CD8-positive, alpha-beta memory T cell (primary cell): ENCODE measurements at regions of chr13 and their contacts with region 1.

Region 1: DNA sequence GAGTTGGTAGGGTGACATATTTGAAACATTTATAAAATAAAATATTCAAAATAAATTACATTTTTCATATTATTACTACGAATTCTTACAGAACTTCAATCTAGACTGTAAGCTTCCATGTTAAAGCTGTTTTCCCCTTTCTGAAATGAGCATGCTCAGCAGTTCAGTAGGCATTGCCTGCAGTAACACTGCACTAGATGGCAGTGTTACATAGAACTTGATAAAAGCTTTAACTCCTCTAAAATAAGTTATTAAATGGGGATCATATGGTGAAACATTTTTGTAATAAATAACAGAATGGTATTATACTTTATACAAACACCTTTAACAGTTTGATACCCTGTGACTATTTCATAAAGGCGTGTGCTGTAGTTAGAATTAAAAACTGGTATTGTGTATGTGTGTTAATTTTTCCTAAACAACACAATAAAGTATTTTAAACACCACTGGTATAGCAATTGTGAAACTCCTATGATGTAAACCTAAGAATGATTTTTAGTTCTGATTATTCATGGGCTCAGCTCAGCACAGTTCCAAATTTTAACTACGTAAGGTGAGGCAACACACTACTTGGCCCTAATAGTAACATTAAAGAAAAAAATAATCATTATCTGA is 11.6 kb upstream of the GPR18 start:
- DNase-seq: peak in 2 of 5 donors; percentile 52 to 53
- H3K4me3 ChIP-seq: no peak overlapping the region
- H3K4me3 Mint-ChIP-seq: peak overlapping the region in 1 of 7 donors; percentile 18
- H3K27ac ChIP-seq: no peak overlapping the region
- H3K27ac Mint-ChIP-seq: peak overlapping the region in 7 of 8 donors; percentile 50 to 99 (median 82)
- H3K4me1 ChIP-seq: peaks cover 56% of the 10 kb centered on the region
- H3K4me1 Mint-ChIP-seq: peaks cover 65 to 74% (median 72%) of the 10 kb centered on the region in 3 donors
- H3K27me3 ChIP-seq: no peaks in the 10 kb centered on the region
- H3K27me3 Mint-ChIP-seq: no peaks in the 10 kb centered on the region

Region 2: DNA sequence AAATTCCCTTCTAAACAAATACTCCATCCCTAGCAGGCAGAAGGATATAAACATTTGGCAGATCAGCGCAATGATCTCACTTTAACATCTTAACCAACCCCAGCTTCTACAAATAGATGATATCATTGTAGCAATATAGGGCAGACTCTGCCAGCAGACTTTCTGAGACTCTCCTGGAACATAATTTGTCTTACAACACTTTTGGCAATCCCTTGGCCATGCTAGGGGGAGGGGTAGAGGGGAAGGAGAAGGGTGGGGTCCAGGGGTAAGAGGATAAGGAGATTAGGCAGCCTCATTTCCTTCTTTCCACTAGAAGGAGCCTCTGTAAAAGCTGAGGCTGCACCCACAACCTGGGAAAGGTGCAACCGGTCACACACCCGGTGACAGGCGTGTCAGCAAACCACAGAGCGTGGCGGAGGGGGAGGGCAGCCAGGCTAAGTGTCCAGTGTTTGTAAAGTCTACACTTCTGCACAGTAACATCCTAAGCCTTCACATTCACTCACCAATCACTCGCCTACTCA is 77.8 kb before region 1 on chr13:
- CTCF ChIA-PET with region 1: interaction called, 223 read pairs
- POLR2A ChIA-PET with region 1: interaction called, 10 read pairs
- DNase-seq: no peak
- H3K4me3 ChIP-seq: no peak overlapping the region
- H3K4me3 Mint-ChIP-seq: no peak overlapping the region
- H3K27ac ChIP-seq: no peak overlapping the region
- H3K27ac Mint-ChIP-seq: peak overlapping the region in 6 of 8 donors; percentile 38 to 88 (median 62)
- H3K4me1 ChIP-seq: peaks cover 4% of the 10 kb centered on the region
- H3K4me1 Mint-ChIP-seq: peaks cover 14 to 30% (median 27%) of the 10 kb centered on the region in 3 donors
- H3K27me3 ChIP-seq: no peaks in the 10 kb centered on the region
- H3K27me3 Mint-ChIP-seq: peaks cover 0 to 2% of the 10 kb centered on the region in 2 donors

Region 3: GRCh38 chr13:99281811-99282263 is 12.1 kb after region 1 on chr13:
- CTCF ChIA-PET with region 1: interaction called, 22 read pairs
- POLR2A ChIA-PET with region 1: interaction called, 8 read pairs
- DNase-seq: peak; percentile 36 to 77 (median 54)
- H3K4me3 ChIP-seq: no peak overlapping the region
- H3K4me3 Mint-ChIP-seq: peak overlapping the region; percentile 47 to 85 (median 74)
- H3K27ac ChIP-seq: peak overlapping the region; percentile 66
- H3K27ac Mint-ChIP-seq: peak overlapping the region; percentile 94 to 100 (median 99)
- H3K4me1 ChIP-seq: peaks cover 87% of the 10 kb centered on the region
- H3K4me1 Mint-ChIP-seq: peaks cover 88 to 99% (median 96%) of the 10 kb centered on the region in 3 donors
- H3K27me3 ChIP-seq: no peaks in the 10 kb centered on the region
- H3K27me3 Mint-ChIP-seq: no peaks in the 10 kb centered on the region

Region 4: GRCh38 chr13:99347911-99348451 is 78.2 kb after region 1 on chr13:
- CTCF ChIA-PET with region 1: interaction called, 44 read pairs
- POLR2A ChIA-PET with region 1: interaction called, 11 read pairs
- DNase-seq: no peak
- H3K4me3 ChIP-seq: no peak overlapping the region
- H3K4me3 Mint-ChIP-seq: peak overlapping the region in 4 of 7 donors; percentile 17 to 57 (median 46)
- H3K27ac ChIP-seq: no peak overlapping the region
- H3K27ac Mint-ChIP-seq: peak overlapping the region; percentile 84 to 99 (median 90)
- H3K4me1 ChIP-seq: peaks cover 64% of the 10 kb centered on the region
- H3K4me1 Mint-ChIP-seq: peaks cover 87 to 99% (median 99%) of the 10 kb centered on the region in 3 donors
- H3K27me3 ChIP-seq: no peaks in the 10 kb centered on the region
- H3K27me3 Mint-ChIP-seq: peaks cover 0 to 1% of the 10 kb centered on the region in 2 donors

Region 5: GRCh38 chr13:99380921-99381645 is 111.3 kb after region 1 on chr13:
- CTCF ChIA-PET with region 1: interaction called, 67 read pairs
- POLR2A ChIA-PET with region 1: no interaction called
- DNase-seq: peak; percentile 27 to 82 (median 62)
- H3K4me3 ChIP-seq: peak overlapping the region; percentile 14
- H3K4me3 Mint-ChIP-seq: peak overlapping the region; percentile 25 to 89 (median 73)
- H3K27ac ChIP-seq: peak overlapping the region; percentile 30
- H3K27ac Mint-ChIP-seq: peak overlapping the region; percentile 95 to 99 (median 98)
- H3K4me1 ChIP-seq: peaks cover 93% of the 10 kb centered on the region
- H3K4me1 Mint-ChIP-seq: peaks cover 84 to 98% (median 98%) of the 10 kb centered on the region in 3 donors
- H3K27me3 ChIP-seq: no peaks in the 10 kb centered on the region
- H3K27me3 Mint-ChIP-seq: no peaks in the 10 kb centered on the region

Region 6: GRCh38 chr13:99425485-99426341 is 156.0 kb after region 1 on chr13:
- CTCF ChIA-PET with region 1: interaction called, 10 read pairs
- POLR2A ChIA-PET with region 1: interaction called, 3 read pairs
- DNase-seq: peak in 4 of 5 donors; percentile 29 to 64 (median 48)
- H3K4me3 ChIP-seq: peak overlapping the region; percentile 48
- H3K4me3 Mint-ChIP-seq: peak overlapping the region; percentile 38 to 84 (median 69)
- H3K27ac ChIP-seq: no peak overlapping the region
- H3K27ac Mint-ChIP-seq: peak overlapping the region; percentile 81 to 97 (median 92)
- H3K4me1 ChIP-seq: peaks cover 68% of the 10 kb centered on the region
- H3K4me1 Mint-ChIP-seq: peaks cover 37 to 62% (median 51%) of the 10 kb centered on the region in 3 donors
- H3K27me3 ChIP-seq: no peaks in the 10 kb centered on the region
- H3K27me3 Mint-ChIP-seq: no peaks in the 10 kb centered on the region